ENCODE measurements at regions of chr9 and their contacts with region 1.

Region 1: GRCh38 chr9:2857564-2858198 is 13.8 kb upstream of the PUM3 start:
- DNase-seq: no peak
- H3K4me3 ChIP-seq: no peak overlapping the region
- CTCF ChIP-seq: peak; percentile 80

Region 2: DNA sequence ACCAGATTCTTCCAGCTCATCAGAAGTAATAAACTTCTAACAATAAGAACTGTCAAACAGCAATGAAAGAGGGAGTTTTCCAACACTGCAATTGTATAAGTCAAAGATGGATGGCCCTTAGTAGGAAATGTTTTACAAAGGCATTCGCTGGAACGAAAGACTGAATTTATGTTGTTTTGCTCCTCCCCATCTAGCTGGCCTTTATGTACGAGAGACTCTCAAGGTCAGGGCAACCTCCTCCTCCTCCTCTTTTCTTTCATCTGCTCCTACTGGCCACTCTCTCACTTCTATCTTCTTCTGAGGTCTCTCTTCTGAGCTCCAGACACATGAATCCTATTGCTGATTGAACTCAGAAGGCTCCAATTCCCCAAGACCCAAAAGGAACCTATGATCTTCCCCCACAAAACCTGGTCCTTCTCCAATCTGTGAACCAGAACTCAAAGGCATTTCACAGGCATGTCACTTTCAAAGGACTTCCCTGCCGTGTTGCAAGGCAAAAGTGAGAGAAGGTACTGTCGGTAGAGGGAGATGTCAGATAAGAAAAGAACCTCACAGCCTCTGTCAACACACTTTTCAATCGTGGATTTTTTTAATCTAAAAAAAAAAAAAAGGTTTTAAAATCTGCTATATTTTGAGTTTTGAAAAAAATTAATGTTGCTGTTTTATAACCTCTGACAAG is 14.7 kb after region 1 on chr9:
- CTCF ChIA-PET with region 1: interaction called, 24 read pairs
- POLR2A ChIA-PET with region 1: no interaction called
- DNase-seq: no peak
- H3K4me3 ChIP-seq: no peak overlapping the region
- CTCF ChIP-seq: peak; percentile 41

Region 3: DNA sequence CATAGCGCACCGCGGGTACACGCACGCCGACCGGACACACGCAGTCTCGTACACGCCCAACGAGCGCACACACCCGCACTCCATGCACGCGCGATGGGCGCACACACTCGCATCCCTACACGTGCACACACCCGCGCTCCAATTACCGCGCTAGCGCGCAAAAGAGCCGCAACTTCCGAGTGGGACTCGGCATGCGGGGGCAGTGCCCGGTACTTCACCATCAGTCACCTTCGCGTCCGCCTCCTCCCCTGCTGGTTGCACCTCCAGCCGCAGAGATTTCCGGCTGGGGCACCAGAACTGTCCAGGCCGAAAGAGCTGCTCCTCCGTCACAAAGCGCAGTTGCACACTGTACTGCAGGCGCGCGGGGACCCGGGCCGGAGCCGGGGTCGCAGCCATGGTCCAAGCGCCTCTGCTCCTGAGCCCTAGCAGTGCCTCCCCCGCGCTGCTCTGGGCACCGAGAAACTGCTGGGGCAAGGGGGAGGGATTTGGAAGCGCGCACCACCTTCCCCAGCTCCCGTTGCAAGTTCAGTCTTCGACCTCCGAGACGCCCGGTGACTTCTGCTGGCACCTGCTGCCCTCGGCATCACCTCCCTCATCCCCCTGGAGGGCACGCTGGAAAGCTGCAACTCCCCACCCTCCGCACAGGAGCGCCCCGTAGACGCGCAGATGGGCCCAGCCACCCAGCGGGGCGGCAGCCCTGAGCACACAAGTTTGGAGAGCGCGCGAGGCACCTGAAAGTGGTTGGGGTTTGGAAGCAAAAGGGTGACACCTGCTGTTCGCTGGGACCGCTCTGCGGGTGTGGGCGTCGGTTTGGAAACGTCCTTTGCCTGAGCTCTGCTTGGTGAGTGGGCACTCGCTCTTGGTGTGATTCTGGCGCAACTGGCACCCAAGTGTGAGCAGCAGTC is 323.6 kb after region 1 on chr9:
- CTCF ChIA-PET with region 1: interaction called, 22 read pairs
- POLR2A ChIA-PET with region 1: no interaction called
- DNase-seq: no peak
- H3K4me3 ChIP-seq: peak overlapping the region; percentile 45
- CTCF ChIP-seq: peak; percentile 44

Region 4: GRCh38 chr9:4375424-4376200 is 1517.9 kb after region 1 on chr9:
- CTCF ChIA-PET with region 1: interaction called, 45 read pairs
- POLR2A ChIA-PET with region 1: no interaction called
- DNase-seq: peak; percentile 85
- H3K4me3 ChIP-seq: no peak overlapping the region
- CTCF ChIP-seq: peak; percentile 41

Measured in AG04449 (cell line).